ENCODE measurements at regions of chr4 and their contacts with region 1.

Region 1: DNA sequence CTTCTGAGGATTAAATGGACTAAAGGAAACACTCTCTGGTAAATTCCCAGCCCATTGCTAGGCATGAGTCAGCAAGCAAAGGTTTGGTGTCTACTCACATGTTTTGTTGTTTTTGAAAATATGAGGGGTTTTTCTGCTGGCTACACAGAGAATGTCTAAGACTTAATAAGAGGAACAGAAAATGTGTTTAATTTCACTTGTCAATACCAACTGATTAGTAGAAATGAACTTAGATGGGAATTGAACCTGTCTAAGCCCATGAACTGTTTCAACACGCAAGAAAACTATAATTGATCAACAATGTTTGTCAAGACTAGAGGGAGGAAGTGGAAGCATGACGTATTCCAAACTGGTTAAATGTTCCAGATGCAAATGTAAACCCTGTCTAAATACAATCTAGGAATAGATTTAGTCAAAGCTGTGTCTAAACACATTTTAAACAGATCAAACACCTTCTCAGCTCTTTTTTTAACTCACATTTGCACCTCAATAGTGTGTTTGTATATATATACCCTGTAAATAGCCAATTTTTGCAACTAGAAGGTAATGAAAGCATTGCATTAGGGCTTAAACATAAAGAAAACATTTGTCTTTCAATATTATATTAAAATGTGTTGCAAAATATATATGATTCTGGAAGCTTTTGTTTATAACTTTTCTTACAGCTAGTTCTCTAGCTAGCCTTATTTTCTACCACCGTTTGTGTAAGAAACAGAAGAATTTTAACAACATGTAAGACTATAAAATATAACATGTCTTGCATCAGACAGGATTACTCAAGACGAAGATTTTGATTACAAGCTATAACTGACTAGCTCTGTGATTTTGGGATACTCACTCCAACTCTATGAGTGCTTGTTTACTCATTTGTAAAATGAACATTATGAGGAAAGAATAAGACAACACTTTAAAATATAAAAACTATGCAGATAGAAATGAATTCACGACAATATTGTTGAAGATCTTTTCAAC is 607.8 kb downstream of the FSTL5 start:
- DNase-seq: peak; percentile 88
- ATAC-seq: peak; percentile 91
- H3K4me3 ChIP-seq: no peak overlapping the region
- H3K27ac ChIP-seq: peak overlapping the region; percentile 64
- H3K4me1 ChIP-seq: peaks cover 6% of the 10 kb centered on the region; the same call in 1 of the 2 replicates
- H3K27me3 ChIP-seq: no peaks in the 10 kb centered on the region
- CTCF ChIP-seq: no peak
- EP300 ChIP-seq: peak; percentile 66 to 95; a peak in 3 of 4 replicates
- POLR2A ChIP-seq: no peak
- RAD21 ChIP-seq: no peak

Region 2: DNA sequence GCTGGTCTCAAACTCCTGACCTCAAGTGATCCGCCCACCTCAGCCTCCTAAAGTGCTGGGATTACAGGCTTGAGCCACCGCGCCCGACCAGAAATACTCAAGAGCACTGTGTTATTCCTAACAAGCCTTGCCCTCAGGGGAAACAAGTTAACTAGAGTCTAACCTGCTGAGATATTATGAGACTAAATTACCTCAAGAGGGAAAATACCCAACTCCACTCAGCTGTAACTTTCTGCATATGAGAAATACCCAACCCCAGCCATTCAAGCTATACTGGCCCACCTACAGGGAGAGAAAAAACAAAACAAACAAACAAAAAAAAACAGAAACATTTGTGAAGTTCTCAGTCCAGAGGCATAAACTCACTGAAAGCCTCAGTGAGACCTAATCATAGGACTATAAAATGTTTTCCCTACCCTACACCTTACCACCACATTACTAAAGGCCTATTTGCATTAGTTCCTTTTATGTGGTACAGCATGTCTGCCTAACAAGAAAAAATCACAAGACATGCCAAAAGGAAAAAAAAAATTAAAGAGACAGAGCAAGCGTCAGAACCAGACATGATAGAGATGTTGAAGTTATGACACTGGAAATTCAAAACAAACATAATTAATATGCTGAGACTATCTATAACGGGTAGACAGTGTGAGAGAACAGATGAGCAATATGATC is 268.2 kb before region 1 on chr4:
- CTCF ChIA-PET with region 1: no interaction called
- POLR2A ChIA-PET with region 1: no interaction called
- RAD21 ChIA-PET with region 1: no interaction called
- SMC1A ChIA-PET with region 1: no interaction called
- in situ Hi-C with region 1: no loop called
- intact Hi-C with region 1: loop called (anchors 10 kb)
- DNase-seq: peak; percentile 31
- ATAC-seq: peak; percentile 97
- H3K4me3 ChIP-seq: no peak overlapping the region
- H3K27ac ChIP-seq: no peak overlapping the region
- H3K4me1 ChIP-seq: no peaks in the 10 kb centered on the region
- H3K27me3 ChIP-seq: no peaks in the 10 kb centered on the region
- CTCF ChIP-seq: no peak
- EP300 ChIP-seq: no peak
- POLR2A ChIP-seq: no peak
- RAD21 ChIP-seq: no peak

Region 3: DNA sequence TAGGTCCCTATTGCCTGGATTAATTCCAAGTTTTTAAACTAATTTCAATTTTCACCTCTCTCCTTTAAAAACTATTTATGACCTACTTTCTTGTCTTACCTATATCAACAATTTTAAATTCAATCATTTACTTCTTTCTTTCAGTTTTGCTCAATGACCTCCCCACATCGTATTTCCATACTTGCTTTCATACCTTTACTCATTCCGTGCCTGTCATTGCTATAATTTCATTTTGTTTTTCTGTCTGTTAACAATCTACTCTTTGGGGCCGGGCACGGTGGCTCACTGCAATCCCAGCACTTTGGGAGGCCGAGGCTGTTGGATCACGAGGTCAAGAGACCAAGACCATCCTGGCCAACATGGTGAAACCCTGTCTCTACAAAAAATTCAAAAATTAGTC is 173.3 kb before region 1 on chr4:
- CTCF ChIA-PET with region 1: no interaction called
- POLR2A ChIA-PET with region 1: no interaction called
- RAD21 ChIA-PET with region 1: interaction called, 3 read pairs
- SMC1A ChIA-PET with region 1: interaction called, 5 read pairs
- in situ Hi-C with region 1: no loop called
- intact Hi-C with region 1: loop called (anchors 5 kb)
- DNase-seq: no peak
- ATAC-seq: peak; percentile 49
- H3K4me3 ChIP-seq: no peak overlapping the region; the same call in 1 of the 2 replicates
- H3K27ac ChIP-seq: no peak overlapping the region
- H3K4me1 ChIP-seq: no peaks in the 10 kb centered on the region
- H3K27me3 ChIP-seq: no peaks in the 10 kb centered on the region
- CTCF ChIP-seq: no peak
- EP300 ChIP-seq: no peak
- POLR2A ChIP-seq: no peak
- RAD21 ChIP-seq: no peak

Region 4: DNA sequence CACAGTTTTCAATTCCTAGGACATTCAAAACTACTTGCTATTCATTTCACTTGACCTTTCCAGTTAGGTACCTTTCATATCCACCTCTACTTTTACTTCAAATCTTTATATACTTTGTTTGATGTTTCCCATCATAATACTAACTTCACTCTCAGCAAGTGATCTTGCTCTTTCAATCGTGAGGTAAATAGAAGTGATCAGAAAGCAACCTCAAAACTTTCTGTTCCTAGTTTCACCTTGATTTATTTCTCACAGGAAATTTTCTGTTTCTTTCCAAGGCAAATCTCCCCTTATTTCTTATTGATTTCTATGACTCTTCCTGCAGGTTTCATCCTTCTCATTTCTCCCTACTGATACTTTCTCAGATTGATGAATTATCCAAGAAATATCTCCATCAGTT is 15.7 kb before region 1 on chr4:
- CTCF ChIA-PET with region 1: interaction called, 4 read pairs
- POLR2A ChIA-PET with region 1: interaction called, 5 read pairs
- RAD21 ChIA-PET with region 1: interaction called, 5 read pairs
- SMC1A ChIA-PET with region 1: interaction called, 13 read pairs
- in situ Hi-C with region 1: no loop called
- intact Hi-C with region 1: no loop called
- DNase-seq: peak; percentile 20
- ATAC-seq: peak; percentile 85
- H3K4me3 ChIP-seq: no peak overlapping the region
- H3K27ac ChIP-seq: peak overlapping the region; percentile 13; the same call in 1 of the 2 replicates
- H3K4me1 ChIP-seq: peaks cover 3% of the 10 kb centered on the region; the same call in 1 of the 2 replicates
- H3K27me3 ChIP-seq: no peaks in the 10 kb centered on the region
- CTCF ChIP-seq: no peak
- EP300 ChIP-seq: no peak
- POLR2A ChIP-seq: no peak
- RAD21 ChIP-seq: no peak

Region 5: GRCh38 chr4:161949946-161950725 is 394.2 kb after region 1 on chr4:
- CTCF ChIA-PET with region 1: interaction called, 18 read pairs
- POLR2A ChIA-PET with region 1: no interaction called
- RAD21 ChIA-PET with region 1: interaction called, 21 read pairs
- SMC1A ChIA-PET with region 1: interaction called, 16 read pairs
- in situ Hi-C with region 1: no loop called
- intact Hi-C with region 1: no loop called
- DNase-seq: no peak
- ATAC-seq: no peak
- H3K4me3 ChIP-seq: no peak overlapping the region
- H3K27ac ChIP-seq: no peak overlapping the region
- H3K4me1 ChIP-seq: no peaks in the 10 kb centered on the region
- H3K27me3 ChIP-seq: no peaks in the 10 kb centered on the region
- CTCF ChIP-seq: no peak
- EP300 ChIP-seq: no peak
- POLR2A ChIP-seq: no peak
- RAD21 ChIP-seq: no peak